A673 (cell line): ENCODE measurements at regions of chr1 and their contacts with region 1.

Region 1: DNA sequence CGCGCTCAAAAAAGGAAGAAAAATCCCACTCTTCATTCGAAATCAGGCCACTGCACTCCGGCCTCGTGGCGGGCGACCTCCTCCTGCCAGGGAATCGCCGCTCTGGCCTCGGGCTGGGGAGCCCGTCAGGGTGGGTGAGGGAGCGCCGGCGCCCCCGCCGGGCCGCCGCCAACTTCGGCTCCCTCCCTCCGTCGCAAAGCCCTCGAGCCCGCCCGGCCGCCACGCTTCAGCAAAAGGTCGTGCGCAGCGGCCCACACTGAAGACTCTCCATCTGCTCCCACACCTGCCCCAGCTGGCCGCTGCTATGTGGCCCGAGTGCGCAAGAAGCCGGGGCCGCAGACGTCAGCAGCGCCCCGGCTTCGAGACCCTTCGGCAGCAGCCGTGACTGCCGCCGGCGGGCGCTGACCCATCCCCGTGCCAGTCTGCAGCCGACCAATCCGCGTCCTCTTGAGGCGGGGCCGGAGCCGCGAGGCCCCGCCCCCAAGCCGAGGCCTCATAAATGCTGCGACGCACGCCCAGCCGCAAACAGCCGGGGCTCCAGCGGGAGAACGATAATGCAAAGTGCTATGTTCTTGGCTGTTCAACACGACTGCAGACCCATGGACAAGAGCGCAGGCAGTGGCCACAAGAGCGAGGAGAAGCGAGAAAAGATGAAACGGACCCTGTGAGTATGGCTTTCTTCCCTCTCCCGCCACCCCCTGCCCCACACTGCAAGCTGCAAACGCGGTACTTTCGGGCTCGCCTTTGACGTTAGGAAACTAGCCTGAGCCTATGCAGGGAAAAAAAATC is at the start of gene RGS2:
- DNase-seq: peak; percentile 94
- H3K4me3 ChIP-seq: peak within 1 kb of the TSS; percentile 64
- H3K27ac ChIP-seq: peak within 1 kb of the TSS; percentile 68
- H3K4me1 ChIP-seq: peaks cover 16% of the 10 kb centered on the region
- H3K27me3 ChIP-seq: no peaks in the 10 kb centered on the region
- CTCF ChIP-seq: peak; percentile 21; the same call in 1 of the 2 replicates
- total RNA-seq, gene RGS2: 24.2 and 24.7 TPM in 2 replicates

Region 2: GRCh38 chr1:192435704-192436103 is 373.0 kb before region 1 on chr1:
- CTCF ChIA-PET with region 1: no interaction called
- POLR2A ChIA-PET with region 1: interaction called, 12 read pairs
- intact Hi-C with region 1: no loop called
- DNase-seq: no peak
- H3K4me3 ChIP-seq: no peak overlapping the region
- H3K27ac ChIP-seq: no peak overlapping the region
- H3K4me1 ChIP-seq: peaks cover 4% of the 10 kb centered on the region
- H3K27me3 ChIP-seq: no peaks in the 10 kb centered on the region
- CTCF ChIP-seq: no peak

Region 3: DNA sequence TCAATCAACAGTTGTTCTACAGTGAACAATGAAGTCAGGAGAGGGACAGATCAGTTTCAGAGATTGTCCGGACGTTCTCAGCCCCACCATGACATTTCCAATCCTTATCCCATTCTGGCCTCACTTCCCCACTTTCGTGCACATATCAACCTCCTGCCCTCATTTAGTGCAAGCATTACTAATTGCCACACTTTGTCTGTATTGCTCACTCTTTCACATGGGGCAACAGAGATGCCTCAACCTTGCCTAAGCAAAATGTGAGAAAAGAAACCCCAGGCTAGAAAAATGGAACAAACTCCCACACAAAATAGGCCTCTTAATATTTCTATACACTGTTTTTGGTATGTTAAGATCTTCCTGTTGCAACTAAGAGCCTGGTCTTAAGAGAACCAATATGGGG is 242.1 kb before region 1 on chr1:
- CTCF ChIA-PET with region 1: no interaction called
- POLR2A ChIA-PET with region 1: no interaction called
- intact Hi-C with region 1: no loop called
- DNase-seq: no peak
- H3K4me3 ChIP-seq: no peak overlapping the region
- H3K27ac ChIP-seq: no peak overlapping the region
- H3K4me1 ChIP-seq: no peaks in the 10 kb centered on the region
- H3K27me3 ChIP-seq: no peaks in the 10 kb centered on the region
- CTCF ChIP-seq: no peak

Region 4: DNA sequence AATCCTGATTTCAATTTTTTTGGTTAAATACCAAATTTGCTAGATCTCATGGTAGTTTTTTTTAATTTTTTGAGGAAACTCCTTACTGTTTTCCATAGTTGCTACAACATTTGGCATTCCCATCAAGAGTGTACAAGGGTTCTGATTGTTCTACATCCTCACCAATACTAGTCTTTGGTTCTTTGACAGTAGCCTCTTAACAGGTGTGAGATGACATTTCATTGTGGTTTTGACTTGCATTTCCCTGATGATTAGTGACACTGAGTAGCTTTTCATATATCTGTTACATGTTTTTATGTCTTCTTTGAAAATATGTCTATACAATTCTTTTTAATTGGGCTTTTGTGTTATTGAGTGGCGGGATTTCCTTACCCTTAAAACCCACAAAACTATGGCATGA is 193.7 kb before region 1 on chr1:
- CTCF ChIA-PET with region 1: no interaction called
- POLR2A ChIA-PET with region 1: no interaction called
- intact Hi-C with region 1: loop called (anchors 5 kb)
- DNase-seq: no peak
- H3K4me3 ChIP-seq: no peak overlapping the region
- H3K27ac ChIP-seq: no peak overlapping the region
- H3K4me1 ChIP-seq: peaks cover 21% of the 10 kb centered on the region
- H3K27me3 ChIP-seq: peaks cover 42% of the 10 kb centered on the region
- CTCF ChIP-seq: no peak

Region 5: DNA sequence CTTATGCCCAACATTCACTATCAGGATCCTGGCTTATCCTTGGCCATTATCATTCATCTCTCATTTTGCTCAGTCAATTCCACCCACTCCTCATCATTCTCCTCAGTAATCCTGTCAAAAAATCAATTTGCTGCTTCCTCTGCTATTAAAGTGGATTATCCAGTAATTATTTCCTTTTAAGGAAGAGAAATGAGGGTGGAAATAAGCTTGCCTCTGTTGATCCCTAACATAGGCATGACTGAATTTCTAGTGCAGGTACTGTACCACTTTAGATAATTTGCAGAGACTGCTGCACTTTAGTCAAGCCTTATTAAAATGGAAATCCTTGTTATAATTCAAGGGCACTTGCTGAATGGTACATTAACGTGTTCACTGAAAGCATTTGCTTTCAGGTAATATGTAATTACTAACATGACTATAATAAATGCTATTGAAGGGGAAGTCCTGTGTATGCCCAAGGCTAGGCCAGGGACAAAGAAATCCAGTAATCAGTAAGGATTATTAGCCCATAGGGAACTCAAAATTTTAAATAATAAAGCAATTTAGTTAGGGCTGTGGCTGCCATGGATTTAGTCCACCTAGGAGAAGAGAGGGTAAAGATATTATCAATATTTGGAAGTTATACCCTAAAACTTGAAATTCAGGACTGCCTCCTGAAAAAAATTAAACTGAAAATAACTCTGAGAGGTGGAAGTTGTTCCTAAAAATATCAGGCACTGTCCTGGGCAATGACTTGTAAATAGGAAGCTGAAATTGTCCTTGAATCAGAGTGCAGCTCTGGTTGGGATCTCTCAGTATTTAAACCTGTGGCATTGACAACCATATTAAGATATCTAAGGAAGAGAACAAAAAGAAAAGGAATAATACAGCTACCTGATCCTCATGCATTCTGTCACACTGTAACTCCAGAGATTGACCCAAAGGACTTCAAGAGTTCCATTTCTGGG is 43.6 kb after region 1 on chr1:
- CTCF ChIA-PET with region 1: no interaction called
- POLR2A ChIA-PET with region 1: no interaction called
- intact Hi-C with region 1: loop called (anchors 5 kb)
- DNase-seq: peak; percentile 94
- H3K4me3 ChIP-seq: no peak overlapping the region
- H3K27ac ChIP-seq: peak overlapping the region; percentile 16
- H3K4me1 ChIP-seq: peaks cover 39% of the 10 kb centered on the region
- H3K27me3 ChIP-seq: no peaks in the 10 kb centered on the region
- CTCF ChIP-seq: no peak

Region 6: DNA sequence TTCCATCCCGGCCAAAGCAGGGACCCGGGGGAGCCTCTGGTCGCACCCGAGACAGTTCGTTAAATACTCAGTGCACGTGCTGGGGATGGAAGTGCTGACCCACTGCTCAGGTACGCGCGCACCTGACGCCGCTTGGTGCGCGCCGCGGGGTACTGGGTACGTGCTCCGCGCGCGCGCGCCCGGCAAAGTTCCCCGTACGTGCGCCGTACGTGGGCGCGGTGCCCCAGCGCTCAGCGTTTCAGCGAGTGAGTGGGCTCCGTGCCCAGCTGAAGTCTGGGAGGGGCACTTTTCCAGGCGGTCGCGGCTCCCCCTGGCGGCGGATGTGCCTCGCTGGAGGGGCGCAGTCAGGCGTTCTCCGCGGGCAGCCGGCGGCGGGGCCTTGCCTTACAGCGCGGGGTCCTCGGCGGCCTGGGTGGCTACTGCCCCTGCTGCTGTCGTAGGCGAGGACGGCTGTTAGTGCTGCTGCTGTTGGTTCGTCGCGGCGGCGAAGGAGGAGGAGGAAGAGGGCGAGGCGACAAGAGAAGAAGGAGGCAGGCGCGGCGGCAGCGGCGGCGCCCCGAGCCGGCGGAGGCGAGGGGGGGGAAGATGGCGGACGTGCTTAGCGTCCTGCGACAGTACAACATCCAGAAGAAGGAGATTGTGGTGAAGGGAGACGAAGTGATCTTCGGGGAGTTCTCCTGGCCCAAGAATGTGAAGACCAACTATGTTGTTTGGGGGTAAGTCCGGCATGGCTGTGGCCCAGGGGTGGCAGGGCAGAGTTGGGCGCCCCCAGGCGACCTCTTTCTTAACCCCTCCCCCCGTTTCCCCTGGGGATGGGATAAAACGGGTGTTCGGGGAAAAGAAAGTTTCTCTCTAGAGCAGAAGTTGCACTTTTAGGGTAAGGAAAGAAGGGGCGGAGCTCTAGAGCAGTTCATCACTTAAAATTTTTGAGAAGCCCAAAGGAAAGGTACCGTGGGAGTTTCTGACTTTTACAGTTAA is 313.2 kb after region 1 on chr1 and contains the start of gene CDC73:
- CTCF ChIA-PET with region 1: no interaction called
- POLR2A ChIA-PET with region 1: no interaction called
- intact Hi-C with region 1: loop called (anchors 5 kb)
- DNase-seq: peak; percentile 98
- H3K4me3 ChIP-seq: peak within 1 kb of the TSS; percentile 86
- H3K27ac ChIP-seq: peak within 1 kb of the TSS; percentile 95
- H3K4me1 ChIP-seq: peaks cover 9% of the 10 kb centered on the region
- H3K27me3 ChIP-seq: no peaks in the 10 kb centered on the region
- CTCF ChIP-seq: peak; percentile 99
- total RNA-seq, gene CDC73: 61.5 and 71.0 TPM in 2 replicates